ENCODE measurements at regions of chr4 and their contacts with region 1.

Region 1: DNA sequence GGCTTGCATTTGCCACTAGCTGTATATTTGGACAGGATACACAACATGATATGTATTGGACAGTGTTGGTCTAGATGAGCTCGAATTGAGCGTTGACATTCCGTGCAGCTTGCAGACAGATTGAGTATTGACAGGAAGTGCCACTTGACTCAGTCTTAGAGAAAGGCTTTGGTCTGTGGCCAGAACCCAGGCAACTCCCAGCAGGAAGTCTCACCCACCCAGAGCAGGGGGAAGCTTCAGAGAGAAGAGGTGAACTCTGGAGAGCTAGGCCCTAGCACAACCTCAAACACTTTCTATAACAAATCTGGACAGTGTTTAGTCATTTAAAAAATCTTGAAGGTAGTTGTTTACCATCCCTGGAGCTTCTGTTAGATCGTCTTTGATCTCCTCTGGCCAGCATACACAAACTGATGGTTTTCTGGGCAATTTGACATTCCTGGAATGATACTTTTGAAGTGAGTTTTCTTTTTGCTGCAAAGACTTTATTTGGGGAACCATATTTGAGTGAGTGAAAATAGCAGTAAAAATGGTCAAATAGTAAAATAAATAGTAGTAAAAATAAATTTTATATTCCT is 280.4 kb downstream of the FBXW7 start:
- DNase-seq: peak; percentile 63
- ATAC-seq: peak; percentile 94
- H3K4me3 ChIP-seq: no peak overlapping the region
- H3K27ac ChIP-seq: no peak overlapping the region
- H3K4me1 ChIP-seq: peaks cover 19% of the 10 kb centered on the region
- H3K27me3 ChIP-seq: no peaks in the 10 kb centered on the region
- CTCF ChIP-seq: no peak
- EP300 ChIP-seq: no peak
- POLR2A ChIP-seq: no peak
- RAD21 ChIP-seq: no peak

Region 2: GRCh38 chr4:152243896-152244595 is 11.5 kb before region 1 on chr4:
- CTCF ChIA-PET with region 1: no interaction called
- POLR2A ChIA-PET with region 1: interaction called, 3 read pairs
- RAD21 ChIA-PET with region 1: no interaction called
- SMC1A ChIA-PET with region 1: interaction called, 10 read pairs
- in situ Hi-C with region 1: no loop called
- intact Hi-C with region 1: no loop called
- DNase-seq: no peak
- ATAC-seq: no peak
- H3K4me3 ChIP-seq: no peak overlapping the region
- H3K27ac ChIP-seq: no peak overlapping the region
- H3K4me1 ChIP-seq: no peaks in the 10 kb centered on the region
- H3K27me3 ChIP-seq: no peaks in the 10 kb centered on the region; a peak in 1 of 4 replicates
- CTCF ChIP-seq: no peak
- EP300 ChIP-seq: no peak
- POLR2A ChIP-seq: no peak
- RAD21 ChIP-seq: no peak

Region 3: DNA sequence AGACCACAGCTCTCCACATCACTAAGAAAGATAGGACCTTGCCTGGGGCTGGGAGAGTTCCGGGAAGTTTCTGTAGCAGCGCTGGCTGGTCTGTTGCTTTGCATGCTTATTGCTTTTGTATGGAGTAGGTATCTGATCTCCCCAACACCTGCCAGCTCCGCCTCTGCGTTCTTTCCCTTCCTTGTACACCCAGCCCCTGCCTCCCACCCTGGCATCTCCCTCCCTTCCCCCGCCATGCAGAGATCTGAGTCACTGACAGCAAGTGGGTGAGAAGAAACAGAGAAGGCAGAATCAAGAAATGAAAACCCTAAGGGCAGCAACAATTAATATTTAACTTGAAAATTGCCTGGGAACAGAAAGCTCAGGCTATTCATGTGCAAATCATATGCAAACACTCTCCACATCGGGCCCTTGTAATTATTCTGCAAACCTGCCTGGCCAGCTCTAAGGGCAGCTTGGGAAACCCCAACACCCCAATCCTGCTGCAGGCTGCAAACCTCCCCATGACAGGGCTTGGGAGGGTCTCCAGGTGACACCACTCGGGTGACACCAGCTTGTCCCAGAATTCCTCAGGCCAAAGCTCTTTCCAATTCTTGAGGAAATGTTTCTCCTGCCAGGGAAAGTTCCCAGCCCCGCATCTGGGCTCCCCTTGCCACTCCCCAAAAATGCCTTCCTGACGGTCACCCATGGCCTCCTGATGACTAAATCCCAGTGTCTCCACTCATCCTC is 23.1 kb after region 1 on chr4:
- CTCF ChIA-PET with region 1: interaction called, 8 read pairs
- POLR2A ChIA-PET with region 1: interaction called, 7 read pairs
- RAD21 ChIA-PET with region 1: interaction called, 5 read pairs
- SMC1A ChIA-PET with region 1: interaction called, 21 read pairs
- in situ Hi-C with region 1: no loop called
- intact Hi-C with region 1: loop called (anchors 1 kb)
- DNase-seq: peak; percentile 71
- ATAC-seq: peak; percentile 87
- H3K4me3 ChIP-seq: no peak overlapping the region
- H3K27ac ChIP-seq: no peak overlapping the region
- H3K4me1 ChIP-seq: no peaks in the 10 kb centered on the region
- H3K27me3 ChIP-seq: no peaks in the 10 kb centered on the region; a peak in 1 of 4 replicates
- CTCF ChIP-seq: no peak
- EP300 ChIP-seq: no peak; a peak in 1 of 4 replicates
- POLR2A ChIP-seq: no peak
- RAD21 ChIP-seq: no peak

Region 4: GRCh38 chr4:153466081-153466948 is 1210.8 kb after region 1 on chr4 and contains the start of gene TMEM131L:
- CTCF ChIA-PET with region 1: no interaction called
- POLR2A ChIA-PET with region 1: no interaction called
- RAD21 ChIA-PET with region 1: no interaction called
- SMC1A ChIA-PET with region 1: no interaction called
- in situ Hi-C with region 1: no loop called
- intact Hi-C with region 1: no loop called
- DNase-seq: no peak
- ATAC-seq: peak; percentile 62
- H3K4me3 ChIP-seq: peak within 1 kb of the TSS; percentile 98
- H3K27ac ChIP-seq: peak within 1 kb of the TSS; percentile 88
- H3K4me1 ChIP-seq: peaks cover 18% of the 10 kb centered on the region
- H3K27me3 ChIP-seq: no peaks in the 10 kb centered on the region
- CTCF ChIP-seq: peak in 2 of 3 experiments; percentile 35 to 40; a peak in 3 of 6 replicates
- EP300 ChIP-seq: no peak; a peak in 1 of 4 replicates
- POLR2A ChIP-seq: peak; percentile 93
- RAD21 ChIP-seq: no peak; the same call in 1 of the 2 replicates
- polyA plus RNA-seq, gene TMEM131L: 8.5 to 9.5 TPM

Measured in GM12878 (cell line).